CD8-positive, alpha-beta T cell (primary cell): ENCODE measurements at regions of chr11 and their contacts with region 1.

Region 1: DNA sequence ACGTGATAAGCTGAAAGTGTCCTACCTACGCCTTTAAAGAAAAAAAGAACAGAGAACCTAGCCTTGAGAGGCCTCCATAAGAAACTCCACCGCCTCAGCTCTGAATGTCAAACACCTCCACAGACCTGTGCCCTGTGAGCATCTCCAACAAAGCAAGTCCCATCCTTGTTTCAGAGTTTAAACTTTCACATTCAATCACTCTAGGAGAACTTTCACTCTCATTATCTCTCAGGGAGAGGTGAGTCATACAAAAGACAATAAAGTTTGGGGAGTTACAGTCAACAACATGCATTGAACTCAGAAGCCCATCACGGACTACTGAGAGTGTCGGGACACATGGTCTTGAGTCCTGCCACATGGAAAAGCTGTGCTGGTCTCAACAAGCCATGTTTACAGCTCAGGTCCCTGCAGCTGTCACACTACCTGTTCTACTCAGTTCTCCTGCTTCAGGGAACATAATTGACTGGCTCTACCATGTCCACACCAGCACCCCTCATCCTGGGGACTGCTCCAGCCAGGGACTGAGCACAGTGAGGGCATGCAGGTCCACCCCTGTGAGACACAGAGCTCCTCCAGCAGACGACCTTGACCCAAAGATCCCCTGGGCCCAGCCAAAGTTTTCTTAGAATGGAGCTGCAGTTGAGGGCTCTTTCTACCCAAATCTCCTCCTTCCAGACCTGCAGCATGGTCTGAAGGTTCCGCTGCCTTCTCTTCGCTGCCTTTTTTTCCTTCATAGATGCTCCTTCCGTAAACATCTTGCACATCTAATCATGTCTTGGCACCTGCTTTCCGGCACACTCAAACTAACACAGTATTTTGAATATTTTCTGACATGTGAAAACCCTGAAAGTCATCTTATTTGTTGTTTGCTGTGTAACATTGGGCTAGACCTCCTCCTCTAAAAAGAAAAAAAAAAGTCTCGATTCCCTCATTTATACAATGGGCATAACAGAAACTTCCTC is 114.9 kb downstream of the ETS1 start:
- DNase-seq: peak in 5 of 9 experiments; percentile 46 to 81 (median 63)
- ATAC-seq: peak; percentile 33
- H3K4me3 ChIP-seq: peak overlapping the region; percentile 4 to 33
- H3K4me3 Mint-ChIP-seq: peak overlapping the region; percentile 74
- H3K27ac ChIP-seq: peak overlapping the region; percentile 68 to 88
- H3K27ac Mint-ChIP-seq: peak overlapping the region; percentile 94
- H3K4me1 ChIP-seq: peaks cover 99% of the 10 kb centered on the region
- H3K4me1 Mint-ChIP-seq: peaks cover 99% of the 10 kb centered on the region
- H3K27me3 ChIP-seq: no peaks in the 10 kb centered on the region
- H3K27me3 Mint-ChIP-seq: no peaks in the 10 kb centered on the region
- CTCF ChIP-seq: no peak

Region 2: DNA sequence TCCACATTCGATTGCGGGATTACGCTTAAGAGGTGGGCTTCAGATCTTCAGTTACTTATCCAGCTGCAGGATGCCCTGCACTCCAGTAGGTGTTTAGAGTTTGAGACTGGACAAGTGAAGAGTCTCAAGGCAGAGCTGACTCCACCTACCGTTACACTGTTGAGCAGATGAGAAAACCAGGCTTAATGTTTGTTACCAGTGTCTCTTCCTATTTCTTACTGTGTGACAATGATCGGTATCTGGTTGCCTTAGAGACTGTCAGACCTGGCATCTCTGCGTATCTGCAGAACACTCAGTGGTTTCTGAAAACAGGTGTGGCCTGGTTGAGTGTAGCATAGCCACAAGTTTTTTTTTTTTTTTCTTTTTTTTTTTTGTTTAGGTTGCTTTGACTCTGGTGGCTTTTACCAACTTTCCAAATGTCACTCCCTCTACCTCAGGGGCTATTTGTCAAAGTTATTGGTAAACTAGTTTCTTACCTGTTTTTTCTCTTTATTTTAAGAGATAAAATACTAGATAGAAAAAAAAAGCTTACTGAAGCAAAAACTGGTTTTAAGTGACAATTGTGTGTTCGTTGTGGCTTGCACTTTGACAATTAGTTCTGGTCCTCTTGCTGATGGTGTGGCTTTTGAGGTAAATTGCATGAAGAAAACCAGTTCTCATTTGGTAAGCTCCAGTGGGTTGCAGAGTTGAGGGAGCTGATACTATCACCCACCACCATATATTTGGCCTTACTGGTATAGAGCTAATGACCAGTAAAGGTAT is 169.8 kb before region 1 on chr11:
- CTCF ChIA-PET with region 1: interaction called, 15 read pairs
- POLR2A ChIA-PET with region 1: interaction called, 28 read pairs
- intact Hi-C with region 1: no loop called
- DNase-seq: peak; percentile 49 to 97 (median 72)
- ATAC-seq: peak; percentile 85
- H3K4me3 ChIP-seq: peak overlapping the region; percentile 46 to 51
- H3K4me3 Mint-ChIP-seq: peak overlapping the region; percentile 88
- H3K27ac ChIP-seq: peak overlapping the region; percentile 87 to 89
- H3K27ac Mint-ChIP-seq: peak overlapping the region; percentile 99
- H3K4me1 ChIP-seq: peaks cover 88% of the 10 kb centered on the region
- H3K4me1 Mint-ChIP-seq: peaks cover 92% of the 10 kb centered on the region
- H3K27me3 ChIP-seq: no peaks in the 10 kb centered on the region
- H3K27me3 Mint-ChIP-seq: no peaks in the 10 kb centered on the region
- CTCF ChIP-seq: no peak

Region 3: GRCh38 chr11:128453444-128454336 is 18.7 kb before region 1 on chr11:
- CTCF ChIA-PET with region 1: interaction called, 4 read pairs
- POLR2A ChIA-PET with region 1: interaction called, 11 read pairs
- intact Hi-C with region 1: loop called in 1 of 2 experiments (anchors 2 kb)
- DNase-seq: peak in 1 of 9 experiments; percentile 19
- ATAC-seq: peak; percentile 63
- H3K4me3 ChIP-seq: no peak overlapping the region
- H3K4me3 Mint-ChIP-seq: no peak overlapping the region
- H3K27ac ChIP-seq: peak overlapping the region in 1 of 2 experiments; percentile 32
- H3K27ac Mint-ChIP-seq: peak overlapping the region; percentile 91
- H3K4me1 ChIP-seq: peaks cover 25% of the 10 kb centered on the region
- H3K4me1 Mint-ChIP-seq: peaks cover 76% of the 10 kb centered on the region
- H3K27me3 ChIP-seq: no peaks in the 10 kb centered on the region
- H3K27me3 Mint-ChIP-seq: no peaks in the 10 kb centered on the region
- CTCF ChIP-seq: no peak

Region 4: DNA sequence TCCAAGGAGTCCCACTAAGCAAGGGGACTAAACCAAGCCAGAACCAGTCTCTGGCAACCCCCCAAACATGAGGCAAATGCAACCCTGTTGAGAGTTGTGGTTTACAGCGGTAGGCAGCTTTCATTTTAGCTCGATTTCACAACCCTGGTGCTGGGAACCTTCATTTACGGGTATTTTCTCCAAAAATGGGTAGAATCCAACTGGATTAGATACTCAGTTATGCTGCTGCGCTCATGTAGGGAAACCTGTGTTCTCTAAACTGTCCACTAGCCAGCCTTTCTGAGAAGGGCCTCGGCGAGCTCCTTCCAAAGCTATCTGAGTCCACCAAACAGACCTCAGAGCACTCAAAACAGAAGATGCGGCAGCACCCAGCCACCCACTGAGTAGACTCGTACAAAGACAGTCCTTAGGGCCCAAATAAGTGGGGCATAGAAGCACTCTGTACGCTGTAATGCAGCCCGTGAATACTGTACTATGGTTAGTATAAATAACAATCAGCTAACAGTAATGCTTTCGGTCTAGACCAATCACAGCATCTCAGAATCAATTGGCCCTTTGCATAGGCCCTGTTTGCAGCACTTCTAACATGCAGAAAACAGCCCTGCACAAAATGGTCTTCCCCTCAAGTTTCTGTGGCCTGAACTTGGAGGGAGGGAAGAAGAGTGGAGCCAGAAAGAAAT is 10.2 kb after region 1 on chr11:
- CTCF ChIA-PET with region 1: interaction called, 22 read pairs
- POLR2A ChIA-PET with region 1: interaction called, 138 read pairs
- intact Hi-C with region 1: loop called in 1 of 2 experiments (anchors 1 kb)
- DNase-seq: peak in 4 of 9 experiments; percentile 61 to 91 (median 82)
- ATAC-seq: peak; percentile 62
- H3K4me3 ChIP-seq: peak overlapping the region; percentile 26 to 40
- H3K4me3 Mint-ChIP-seq: peak overlapping the region; percentile 71
- H3K27ac ChIP-seq: peak overlapping the region; percentile 63 to 88
- H3K27ac Mint-ChIP-seq: peak overlapping the region; percentile 99
- H3K4me1 ChIP-seq: peaks cover 96% of the 10 kb centered on the region
- H3K4me1 Mint-ChIP-seq: peaks cover 96% of the 10 kb centered on the region
- H3K27me3 ChIP-seq: no peaks in the 10 kb centered on the region
- H3K27me3 Mint-ChIP-seq: no peaks in the 10 kb centered on the region
- CTCF ChIP-seq: no peak

Region 5: DNA sequence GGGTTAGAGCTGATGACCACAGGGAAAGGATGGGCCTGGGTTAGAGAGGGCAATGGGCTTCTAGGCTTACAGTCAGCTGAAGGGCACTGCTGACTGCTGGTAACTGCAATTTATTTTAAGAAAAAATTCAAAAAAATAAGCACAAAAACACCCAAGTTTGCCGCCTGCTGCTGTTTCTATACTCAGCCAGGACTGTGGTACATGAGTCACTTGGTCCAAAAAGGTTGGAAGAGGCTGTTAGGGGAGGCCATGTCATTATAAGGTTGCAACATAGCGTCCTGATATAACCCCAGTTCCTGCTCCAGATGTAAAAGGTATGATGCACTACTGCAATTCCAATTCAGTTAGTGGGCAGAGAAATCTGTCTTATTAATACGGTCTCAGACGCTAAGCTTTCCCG is 16.1 kb after region 1 on chr11:
- CTCF ChIA-PET with region 1: interaction called, 22 read pairs
- POLR2A ChIA-PET with region 1: interaction called, 138 read pairs
- intact Hi-C with region 1: loop called in 1 of 2 experiments (anchors 1 kb)
- DNase-seq: peak in 1 of 9 experiments; percentile 49
- ATAC-seq: peak; percentile 54
- H3K4me3 ChIP-seq: no peak overlapping the region
- H3K4me3 Mint-ChIP-seq: peak overlapping the region; percentile 55
- H3K27ac ChIP-seq: peak overlapping the region; percentile 12 to 61
- H3K27ac Mint-ChIP-seq: peak overlapping the region; percentile 89
- H3K4me1 ChIP-seq: peaks cover 97% of the 10 kb centered on the region
- H3K4me1 Mint-ChIP-seq: peaks cover 96% of the 10 kb centered on the region
- H3K27me3 ChIP-seq: no peaks in the 10 kb centered on the region
- H3K27me3 Mint-ChIP-seq: no peaks in the 10 kb centered on the region
- CTCF ChIP-seq: no peak

Region 6: GRCh38 chr11:128497061-128497775 is 24.8 kb after region 1 on chr11:
- CTCF ChIA-PET with region 1: interaction called, 6 read pairs
- POLR2A ChIA-PET with region 1: interaction called, 138 read pairs
- intact Hi-C with region 1: no loop called
- DNase-seq: peak in 2 of 9 experiments; percentile 51 to 64
- ATAC-seq: no peak
- H3K4me3 ChIP-seq: peak overlapping the region; percentile 24 to 43
- H3K4me3 Mint-ChIP-seq: peak overlapping the region; percentile 83
- H3K27ac ChIP-seq: peak overlapping the region; percentile 49 to 75
- H3K27ac Mint-ChIP-seq: peak overlapping the region; percentile 98
- H3K4me1 ChIP-seq: peaks cover 98% of the 10 kb centered on the region
- H3K4me1 Mint-ChIP-seq: peaks cover 96% of the 10 kb centered on the region
- H3K27me3 ChIP-seq: no peaks in the 10 kb centered on the region
- H3K27me3 Mint-ChIP-seq: no peaks in the 10 kb centered on the region
- CTCF ChIP-seq: no peak

Region 7: GRCh38 chr11:128506999-128507611 is 34.7 kb after region 1 on chr11:
- CTCF ChIA-PET with region 1: interaction called, 11 read pairs
- POLR2A ChIA-PET with region 1: interaction called, 22 read pairs
- intact Hi-C with region 1: loop called (anchors 2 to 5 kb)
- DNase-seq: peak in 4 of 9 experiments; percentile 51 to 65 (median 60)
- ATAC-seq: peak; percentile 30
- H3K4me3 ChIP-seq: peak overlapping the region; percentile 37 to 94
- H3K4me3 Mint-ChIP-seq: peak overlapping the region; percentile 84
- H3K27ac ChIP-seq: peak overlapping the region; percentile 48 to 75
- H3K27ac Mint-ChIP-seq: peak overlapping the region; percentile 98
- H3K4me1 ChIP-seq: peaks cover 100% of the 10 kb centered on the region
- H3K4me1 Mint-ChIP-seq: peaks cover 97% of the 10 kb centered on the region
- H3K27me3 ChIP-seq: no peaks in the 10 kb centered on the region
- H3K27me3 Mint-ChIP-seq: no peaks in the 10 kb centered on the region
- CTCF ChIP-seq: no peak